Activated CD4-positive, alpha-beta memory T cell treated with anti-CD3 and anti-CD28 coated beads for 36 hours (primary cell): ENCODE measurements at regions of chr4 and their contacts with region 1.

Region 1: GRCh38 chr4:24980064-24980690 is 50.6 kb downstream of the LGI2 start:
- DNase-seq: peak; percentile 61
- H3K4me3 Mint-ChIP-seq: no peak overlapping the region
- H3K27ac Mint-ChIP-seq: no peak overlapping the region
- H3K4me1 Mint-ChIP-seq: peaks cover 5% of the 10 kb centered on the region
- H3K27me3 Mint-ChIP-seq: peaks cover 17% of the 10 kb centered on the region

Region 2: GRCh38 chr4:24488399-24489164 is 491.6 kb before region 1 on chr4:
- CTCF ChIA-PET with region 1: no interaction called
- POLR2A ChIA-PET with region 1: no interaction called
- intact Hi-C with region 1: loop called (anchors 2 kb)
- DNase-seq: peak; percentile 77
- H3K4me3 Mint-ChIP-seq: no peak overlapping the region
- H3K27ac Mint-ChIP-seq: no peak overlapping the region
- H3K4me1 Mint-ChIP-seq: peaks cover 3% of the 10 kb centered on the region
- H3K27me3 Mint-ChIP-seq: peaks cover 17% of the 10 kb centered on the region

Region 3: DNA sequence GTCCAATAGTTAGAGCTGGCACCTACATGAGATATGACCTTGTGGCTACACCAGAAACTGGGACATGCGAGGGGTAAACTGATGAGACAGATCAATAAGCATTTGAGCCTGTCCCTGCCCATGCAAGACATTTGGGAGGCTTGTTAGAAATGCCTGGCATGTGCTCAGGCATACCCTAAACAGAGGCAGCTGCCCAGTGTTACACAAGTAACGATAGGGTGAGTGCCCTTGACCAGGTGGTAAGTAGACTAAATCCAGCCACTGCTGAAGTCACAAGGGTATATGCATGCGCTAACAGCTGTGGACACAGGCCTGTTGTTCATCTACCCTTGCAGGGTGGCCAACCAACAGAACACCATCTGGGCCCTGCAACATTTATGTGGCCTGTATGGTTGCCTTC is 11.2 kb before region 1 on chr4:
- CTCF ChIA-PET with region 1: interaction called, 14 read pairs
- POLR2A ChIA-PET with region 1: no interaction called
- intact Hi-C with region 1: no loop called
- DNase-seq: no peak
- H3K4me3 Mint-ChIP-seq: no peak overlapping the region
- H3K27ac Mint-ChIP-seq: no peak overlapping the region
- H3K4me1 Mint-ChIP-seq: no peaks in the 10 kb centered on the region
- H3K27me3 Mint-ChIP-seq: no peaks in the 10 kb centered on the region

Region 4: DNA sequence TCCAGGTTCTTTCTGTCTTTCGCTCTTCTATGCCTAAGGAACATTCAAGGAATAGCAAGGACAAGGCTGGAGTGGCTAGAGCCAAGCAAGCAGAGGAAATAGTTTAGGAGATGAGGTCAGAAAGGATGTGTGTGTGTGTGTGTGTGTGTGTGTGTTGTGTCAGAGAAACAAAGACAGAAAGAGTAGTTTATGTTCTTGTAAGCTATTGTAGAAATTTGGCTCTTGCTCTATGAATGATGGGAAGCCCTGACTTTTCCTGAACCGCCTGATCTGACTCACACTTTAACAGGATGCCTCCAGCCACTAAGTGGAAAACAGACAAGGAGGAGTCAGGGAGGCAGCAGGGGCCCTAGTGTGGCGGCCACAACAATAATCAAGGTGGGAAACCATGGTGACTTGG is 10.8 kb after region 1 on chr4:
- CTCF ChIA-PET with region 1: interaction called, 25 read pairs
- POLR2A ChIA-PET with region 1: no interaction called
- intact Hi-C with region 1: no loop called
- DNase-seq: no peak
- H3K4me3 Mint-ChIP-seq: no peak overlapping the region
- H3K27ac Mint-ChIP-seq: no peak overlapping the region
- H3K4me1 Mint-ChIP-seq: no peaks in the 10 kb centered on the region
- H3K27me3 Mint-ChIP-seq: peaks cover 3% of the 10 kb centered on the region

Region 5: GRCh38 chr4:24999392-25000089 is 19.4 kb after region 1 on chr4:
- CTCF ChIA-PET with region 1: interaction called, 12 read pairs
- POLR2A ChIA-PET with region 1: no interaction called
- intact Hi-C with region 1: no loop called
- DNase-seq: no peak
- H3K4me3 Mint-ChIP-seq: no peak overlapping the region
- H3K27ac Mint-ChIP-seq: no peak overlapping the region
- H3K4me1 Mint-ChIP-seq: peaks cover 7% of the 10 kb centered on the region
- H3K27me3 Mint-ChIP-seq: peaks cover 10% of the 10 kb centered on the region

Region 6: DNA sequence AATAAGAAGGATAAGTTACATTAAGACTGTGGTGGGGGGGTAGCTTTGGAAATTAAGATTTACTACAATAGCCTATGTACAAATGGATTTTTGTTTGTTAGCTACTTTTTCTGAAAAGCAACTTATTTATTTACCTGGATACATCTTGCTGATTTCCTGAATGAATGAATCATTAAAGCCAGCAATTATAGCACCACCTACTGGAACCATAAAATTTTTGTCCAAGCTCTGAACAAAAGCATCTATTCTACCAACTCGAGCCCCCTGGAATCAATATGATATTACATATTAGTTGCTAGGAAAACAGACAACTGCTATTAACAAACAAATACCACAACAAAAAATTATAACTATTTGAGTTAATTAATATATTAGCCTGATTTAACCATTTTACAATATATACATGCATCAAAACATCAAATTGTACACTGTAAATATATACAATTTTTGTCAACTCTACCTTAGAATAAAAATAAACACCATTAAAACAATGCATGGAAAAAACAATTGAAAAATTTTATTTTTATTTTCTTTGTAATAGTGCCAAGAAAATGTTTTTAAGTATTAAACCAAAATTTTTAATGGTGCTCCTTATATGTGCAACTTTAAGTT is 164.8 kb after region 1 on chr4:
- CTCF ChIA-PET with region 1: interaction called, 31 read pairs
- POLR2A ChIA-PET with region 1: no interaction called
- intact Hi-C with region 1: loop called (anchors 1 kb)
- DNase-seq: no peak
- H3K4me3 Mint-ChIP-seq: no peak overlapping the region
- H3K27ac Mint-ChIP-seq: no peak overlapping the region
- H3K4me1 Mint-ChIP-seq: no peaks in the 10 kb centered on the region
- H3K27me3 Mint-ChIP-seq: no peaks in the 10 kb centered on the region

Region 7: GRCh38 chr4:25367004-25367621 is 386.9 kb after region 1 on chr4:
- CTCF ChIA-PET with region 1: interaction called, 41 read pairs
- POLR2A ChIA-PET with region 1: no interaction called
- intact Hi-C with region 1: loop called (anchors 2 kb)
- DNase-seq: no peak
- H3K4me3 Mint-ChIP-seq: no peak overlapping the region
- H3K27ac Mint-ChIP-seq: no peak overlapping the region
- H3K4me1 Mint-ChIP-seq: no peaks in the 10 kb centered on the region
- H3K27me3 Mint-ChIP-seq: no peaks in the 10 kb centered on the region